Activated CD8-positive, alpha-beta T cell treated with anti-CD3 and anti-CD28 coated beads for 36 hours (primary cell): ENCODE measurements at regions of chr5 and their contacts with region 1.

Region 1: GRCh38 chr5:35794684-35795375 is 61.9 kb upstream of the IL7R start:
- DNase-seq: no peak
- ATAC-seq: peak; percentile 19
- H3K4me3 Mint-ChIP-seq: no peak overlapping the region
- H3K27ac Mint-ChIP-seq: peak overlapping the region; percentile 99
- H3K4me1 Mint-ChIP-seq: peaks cover 81% of the 10 kb centered on the region
- H3K27me3 Mint-ChIP-seq: no peaks in the 10 kb centered on the region
- CTCF ChIP-seq: no peak

Region 2: GRCh38 chr5:35777358-35778087 is 17.3 kb before region 1 on chr5:
- CTCF ChIA-PET with region 1: interaction called, 8 read pairs
- POLR2A ChIA-PET with region 1: interaction called, 14 read pairs
- intact Hi-C with region 1: no loop called
- DNase-seq: peak; percentile 88
- ATAC-seq: peak; percentile 48
- H3K4me3 Mint-ChIP-seq: peak overlapping the region; percentile 3
- H3K27ac Mint-ChIP-seq: peak overlapping the region; percentile 91
- H3K4me1 Mint-ChIP-seq: peaks cover 67% of the 10 kb centered on the region
- H3K27me3 Mint-ChIP-seq: no peaks in the 10 kb centered on the region
- CTCF ChIP-seq: peak; percentile 94

Region 3: GRCh38 chr5:35815089-35815936 is 20.5 kb after region 1 on chr5:
- CTCF ChIA-PET with region 1: interaction called, 14 read pairs
- POLR2A ChIA-PET with region 1: interaction called, 40 read pairs
- intact Hi-C with region 1: loop called (anchors 2 kb)
- DNase-seq: peak; percentile 49
- ATAC-seq: peak; percentile 42
- H3K4me3 Mint-ChIP-seq: no peak overlapping the region
- H3K27ac Mint-ChIP-seq: no peak overlapping the region
- H3K4me1 Mint-ChIP-seq: peaks cover 50% of the 10 kb centered on the region
- H3K27me3 Mint-ChIP-seq: no peaks in the 10 kb centered on the region
- CTCF ChIP-seq: peak; percentile 59

Region 4: DNA sequence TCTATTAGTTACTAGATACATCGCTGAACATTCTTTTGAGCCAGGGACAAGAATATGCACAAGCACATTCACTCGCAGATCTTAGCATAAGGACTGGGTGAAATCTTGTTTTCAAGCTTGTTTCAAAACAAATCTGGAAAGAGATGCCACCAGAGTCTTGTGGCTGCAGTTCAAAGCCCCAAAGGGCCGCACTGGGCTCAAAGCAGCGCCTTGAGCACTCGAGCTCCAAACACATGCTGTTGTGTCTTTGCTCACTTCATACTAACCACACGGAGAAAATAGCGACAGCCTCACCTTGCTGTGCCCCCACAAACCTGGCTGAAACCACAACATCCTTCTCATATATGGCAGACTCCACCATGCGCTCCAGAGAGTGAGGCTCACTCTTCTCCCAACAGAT is 27.7 kb after region 1 on chr5:
- CTCF ChIA-PET with region 1: interaction called, 13 read pairs
- POLR2A ChIA-PET with region 1: interaction called, 12 read pairs
- intact Hi-C with region 1: no loop called
- DNase-seq: peak; percentile 82
- ATAC-seq: peak; percentile 28
- H3K4me3 Mint-ChIP-seq: peak overlapping the region; percentile 55
- H3K27ac Mint-ChIP-seq: peak overlapping the region; percentile 92
- H3K4me1 Mint-ChIP-seq: peaks cover 87% of the 10 kb centered on the region
- H3K27me3 Mint-ChIP-seq: no peaks in the 10 kb centered on the region
- CTCF ChIP-seq: no peak

Region 5: GRCh38 chr5:35830587-35830986 is 35.8 kb after region 1 on chr5:
- CTCF ChIA-PET with region 1: interaction called, 8 read pairs
- POLR2A ChIA-PET with region 1: interaction called, 13 read pairs
- intact Hi-C with region 1: no loop called
- DNase-seq: no peak
- ATAC-seq: peak; percentile 8
- H3K4me3 Mint-ChIP-seq: peak overlapping the region; percentile 19
- H3K27ac Mint-ChIP-seq: peak overlapping the region; percentile 91
- H3K4me1 Mint-ChIP-seq: peaks cover 88% of the 10 kb centered on the region
- H3K27me3 Mint-ChIP-seq: no peaks in the 10 kb centered on the region
- CTCF ChIP-seq: no peak

Region 6: DNA sequence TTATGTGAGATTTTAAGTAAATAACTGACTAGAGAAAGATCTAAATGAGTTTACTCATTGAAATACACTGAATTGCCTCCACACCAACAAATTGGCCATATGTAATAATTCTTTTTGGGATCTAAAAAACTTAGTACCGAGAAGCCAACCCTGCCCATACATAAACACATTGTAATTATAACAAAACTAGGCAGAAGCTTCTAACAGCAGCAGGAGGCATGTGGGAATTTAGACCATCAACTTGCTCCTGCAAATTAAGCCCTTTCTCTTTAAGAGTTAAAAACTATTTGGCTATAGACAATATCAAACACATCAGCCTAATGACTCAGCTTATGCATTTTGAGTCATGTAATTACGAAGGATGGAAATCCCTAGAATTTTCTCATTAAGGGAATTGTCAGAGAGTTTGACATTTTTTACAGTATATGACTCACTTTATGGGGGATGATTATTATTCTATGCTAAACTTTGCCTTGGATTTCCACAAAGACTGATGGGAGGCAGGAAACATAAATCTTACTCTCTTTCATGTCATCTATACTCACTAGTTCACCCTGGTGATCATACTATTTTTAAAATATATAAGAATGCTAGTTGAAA is 62.9 kb after region 1 on chr5:
- CTCF ChIA-PET with region 1: interaction called, 9 read pairs
- POLR2A ChIA-PET with region 1: interaction called, 253 read pairs
- intact Hi-C with region 1: no loop called
- DNase-seq: no peak
- ATAC-seq: no peak
- H3K4me3 Mint-ChIP-seq: peak overlapping the region; percentile 95
- H3K27ac Mint-ChIP-seq: peak overlapping the region; percentile 99
- H3K4me1 Mint-ChIP-seq: peaks cover 67% of the 10 kb centered on the region
- H3K27me3 Mint-ChIP-seq: no peaks in the 10 kb centered on the region
- CTCF ChIP-seq: no peak

Region 7: DNA sequence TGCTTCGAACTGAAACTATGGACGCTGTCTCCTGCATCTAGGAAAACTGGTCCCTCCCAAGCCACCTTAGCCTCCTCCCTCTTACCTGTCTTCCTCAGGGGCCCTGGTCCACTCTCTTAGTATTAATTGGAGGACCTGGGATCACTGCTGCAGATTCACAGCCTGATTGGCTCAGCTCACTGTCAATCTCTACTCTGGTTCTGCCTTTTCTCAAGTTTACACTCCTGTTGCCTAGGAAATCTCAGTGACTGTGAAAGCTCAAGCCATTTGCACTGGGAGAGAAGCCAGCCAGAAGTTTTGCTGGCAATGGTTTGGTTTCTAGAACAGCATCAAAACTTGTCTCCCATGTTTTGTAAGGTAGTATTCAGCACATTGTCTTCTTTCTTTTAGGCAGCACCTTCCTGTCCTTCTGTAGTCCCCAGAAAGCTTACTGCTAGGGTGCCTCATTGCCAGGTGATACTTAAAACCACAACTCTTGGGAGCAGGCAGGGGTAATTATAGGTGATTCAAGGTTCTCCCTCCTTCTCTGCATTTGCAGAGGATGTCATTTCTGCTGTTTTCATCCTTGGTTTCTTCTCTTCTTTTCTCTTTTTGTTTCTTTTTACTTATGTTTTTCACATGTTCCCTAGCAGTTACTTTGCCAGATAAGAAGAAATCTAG is 143.9 kb after region 1 on chr5 and contains the start of gene CAPSL:
- CTCF ChIA-PET with region 1: no interaction called
- POLR2A ChIA-PET with region 1: no interaction called
- intact Hi-C with region 1: no loop called
- DNase-seq: no peak
- ATAC-seq: no peak
- H3K4me3 Mint-ChIP-seq: no peak within 1 kb of the TSS
- H3K27ac Mint-ChIP-seq: no peak within 1 kb of the TSS
- H3K4me1 Mint-ChIP-seq: no peaks in the 10 kb centered on the region
- H3K27me3 Mint-ChIP-seq: peaks cover 8% of the 10 kb centered on the region
- CTCF ChIP-seq: no peak
- total RNA-seq, gene CAPSL: 0.43 to 0.56 TPM